MCF 10A (cell line): ENCODE measurements at regions of chr5 and their contacts with region 1.

Region 1: DNA sequence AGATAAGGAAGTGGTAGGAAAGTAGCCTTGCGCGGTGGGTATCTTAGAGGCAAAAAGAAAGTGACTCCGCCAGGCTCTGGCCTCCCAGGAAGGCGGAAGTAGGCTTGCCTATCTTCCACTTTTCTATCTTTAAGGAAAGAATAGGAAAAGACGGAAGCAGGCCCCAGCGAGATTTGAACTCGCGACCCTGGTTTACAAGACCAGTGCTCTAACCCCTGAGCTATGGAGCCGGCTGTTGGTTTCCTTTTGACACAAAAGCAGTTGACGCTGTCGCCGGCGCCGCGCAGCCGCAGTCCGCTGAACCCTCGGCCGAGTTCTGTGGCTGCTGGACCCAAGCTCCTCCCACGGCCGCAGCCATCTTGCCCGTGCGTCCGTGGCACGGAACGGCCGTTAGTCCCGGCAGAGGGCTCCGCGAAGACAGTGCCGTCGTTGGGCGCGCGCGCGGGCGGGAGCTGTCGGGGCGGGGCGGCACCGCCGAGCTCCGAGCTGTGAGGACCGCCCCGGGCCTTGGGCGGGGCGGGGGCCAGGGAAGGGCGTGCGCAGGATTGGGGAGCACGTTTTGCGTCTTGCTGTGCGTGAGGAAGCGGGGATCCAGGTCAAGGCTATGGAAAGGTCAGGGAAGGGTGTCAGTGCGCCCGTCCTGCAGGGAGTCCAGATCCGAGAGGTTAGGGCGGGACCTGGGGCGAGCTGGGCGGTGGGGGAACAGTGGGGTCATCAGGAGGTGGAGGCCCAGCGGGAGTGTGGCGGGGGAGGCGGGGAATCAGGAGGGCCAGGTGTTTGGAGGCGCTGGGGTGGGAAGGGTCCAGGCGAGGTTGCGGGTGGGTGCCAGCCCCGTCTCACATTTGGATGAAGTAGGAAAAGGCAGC is 13.2 kb downstream of the TRIM7 start:
- DNase-seq: peak; percentile 97
- H3K4me3 Mint-ChIP-seq: peak overlapping the region; percentile 96
- H3K27ac Mint-ChIP-seq: peak overlapping the region; percentile 88
- H3K4me1 Mint-ChIP-seq: peaks cover 14% of the 10 kb centered on the region
- H3K27me3 Mint-ChIP-seq: no peaks in the 10 kb centered on the region
- CTCF ChIP-seq: no peak

Region 2: GRCh38 chr5:180802325-180803180 is 389.2 kb before region 1 on chr5 and contains the start of gene MGAT1:
- CTCF ChIA-PET with region 1: interaction called, 4 read pairs
- POLR2A ChIA-PET with region 1: interaction called, 15 read pairs
- intact Hi-C with region 1: loop called (anchors 5 kb)
- DNase-seq: peak; percentile 93
- H3K4me3 Mint-ChIP-seq: peak within 1 kb of the TSS; percentile 75
- H3K27ac Mint-ChIP-seq: peak within 1 kb of the TSS; percentile 78
- H3K4me1 Mint-ChIP-seq: peaks cover 61% of the 10 kb centered on the region
- H3K27me3 Mint-ChIP-seq: no peaks in the 10 kb centered on the region
- CTCF ChIP-seq: no peak
- total RNA-seq, gene MGAT1: 135 and 150 TPM in 2 replicates

Region 3: DNA sequence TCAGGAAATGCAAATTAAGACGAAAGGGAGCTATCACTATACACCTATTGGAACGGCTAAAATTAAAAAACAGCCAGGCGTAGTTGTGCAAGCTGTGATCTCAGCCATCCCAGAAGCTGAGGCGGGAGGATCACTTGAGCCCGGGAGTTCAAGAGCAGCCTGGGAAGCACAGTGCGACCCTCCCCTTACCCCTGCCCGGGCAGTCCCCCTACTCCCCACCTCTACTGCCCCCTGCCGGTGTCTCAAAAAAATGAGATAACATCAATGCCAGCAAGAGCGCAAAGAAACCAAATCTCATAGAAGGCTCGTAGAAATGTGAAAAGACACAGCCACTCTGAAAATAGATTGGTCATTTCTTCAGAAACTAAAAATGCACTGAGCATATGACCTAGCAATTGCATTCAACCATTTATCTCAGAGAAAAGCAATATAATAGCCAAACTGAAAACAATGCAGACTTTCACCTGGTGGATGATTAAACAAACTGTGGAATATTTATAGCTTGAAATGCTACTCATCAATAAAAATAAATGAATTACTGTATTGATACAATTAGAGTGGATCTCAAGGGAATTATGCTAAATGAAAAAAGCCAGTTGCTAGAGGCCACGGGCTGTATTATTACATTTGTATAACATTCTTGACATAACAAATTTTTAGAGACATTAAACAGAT is 23.8 kb before region 1 on chr5:
- CTCF ChIA-PET with region 1: interaction called, 10 read pairs
- POLR2A ChIA-PET with region 1: interaction called, 34 read pairs
- intact Hi-C with region 1: loop called (anchors 2 kb)
- DNase-seq: peak; percentile 54
- H3K4me3 Mint-ChIP-seq: no peak overlapping the region
- H3K27ac Mint-ChIP-seq: no peak overlapping the region
- H3K4me1 Mint-ChIP-seq: peaks cover 35% of the 10 kb centered on the region
- H3K27me3 Mint-ChIP-seq: no peaks in the 10 kb centered on the region
- CTCF ChIP-seq: peak; percentile 73

Region 4: DNA sequence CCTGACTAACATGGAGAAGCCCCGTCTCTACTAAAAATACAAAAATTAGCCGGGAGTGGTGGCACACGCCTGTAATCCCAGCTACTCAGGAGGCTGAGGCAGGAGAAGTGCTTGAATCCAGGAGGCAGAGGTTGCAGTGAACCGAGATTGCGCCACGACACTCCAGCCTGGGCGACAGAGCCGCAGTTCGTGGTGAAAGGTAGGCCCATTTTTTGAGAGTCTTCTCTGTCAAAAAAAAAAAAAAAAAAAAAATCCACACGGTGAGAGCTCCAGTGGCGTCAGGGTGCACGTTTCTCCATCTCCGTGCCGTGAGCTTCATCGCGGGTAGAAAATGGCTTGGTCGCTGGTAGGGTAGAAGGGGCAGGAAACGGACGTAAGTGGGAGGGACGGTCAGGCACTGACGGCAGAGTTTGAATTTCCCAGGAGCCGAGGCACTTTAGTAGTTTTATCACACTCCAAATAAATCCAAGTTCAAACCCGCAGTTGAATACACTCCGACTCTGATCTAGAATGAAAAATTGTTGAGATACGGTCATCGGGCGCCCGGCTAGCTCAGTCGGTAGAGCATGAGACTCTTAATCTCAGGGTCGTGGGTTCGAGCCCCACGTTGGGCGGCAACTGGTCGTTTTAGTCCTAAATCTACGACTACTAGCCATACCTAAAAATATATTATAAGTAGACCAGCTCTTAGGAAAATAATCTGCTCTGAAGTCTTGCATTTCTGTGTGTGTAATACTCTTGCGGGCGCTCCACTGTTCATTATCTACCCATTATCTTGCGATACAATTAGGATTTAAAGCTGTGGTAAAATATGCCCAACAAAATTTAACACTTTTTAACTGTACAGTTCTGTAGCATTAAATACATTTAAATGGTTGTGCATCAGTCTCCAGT is 15.7 kb after region 1 on chr5:
- CTCF ChIA-PET with region 1: interaction called, 67 read pairs
- POLR2A ChIA-PET with region 1: interaction called, 432 read pairs
- intact Hi-C with region 1: loop called (anchors 1 kb)
- DNase-seq: peak; percentile 94
- H3K4me3 Mint-ChIP-seq: peak overlapping the region; percentile 84
- H3K27ac Mint-ChIP-seq: peak overlapping the region; percentile 81
- H3K4me1 Mint-ChIP-seq: peaks cover 29% of the 10 kb centered on the region
- H3K27me3 Mint-ChIP-seq: no peaks in the 10 kb centered on the region
- CTCF ChIP-seq: no peak

Region 5: DNA sequence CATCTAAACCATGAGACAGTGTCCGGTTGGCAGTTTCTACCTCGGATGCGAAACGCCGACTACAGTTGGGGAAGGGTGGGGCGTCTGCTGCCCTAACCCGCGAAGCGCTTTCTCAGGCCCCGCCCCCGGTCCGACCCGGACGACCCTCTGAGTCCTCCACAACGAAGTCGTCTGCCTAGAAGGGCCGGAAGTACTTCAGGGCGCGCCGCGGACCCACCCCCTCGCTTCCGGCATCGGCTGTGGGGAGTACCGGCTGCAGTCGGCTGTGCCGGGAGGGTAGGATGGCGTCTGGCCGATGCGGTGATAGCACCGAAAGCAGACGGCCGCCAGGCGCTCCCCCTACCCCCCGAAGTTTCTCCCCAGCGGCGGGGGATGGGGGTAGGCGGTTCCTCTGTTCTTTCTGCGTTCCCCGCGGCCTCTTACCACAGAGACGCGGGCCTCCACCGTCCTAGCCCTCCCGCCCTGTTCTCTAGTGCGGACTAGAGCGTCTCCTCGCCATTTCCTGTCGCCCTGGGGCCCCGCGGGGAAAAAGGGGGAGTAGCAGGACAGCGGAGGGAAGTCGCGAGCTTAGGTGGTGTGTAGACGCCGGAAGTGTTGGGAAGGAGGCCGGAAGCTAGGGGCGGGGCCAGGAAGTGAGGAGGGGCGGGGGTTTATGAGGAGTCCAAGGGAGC is 31.4 kb after region 1 on chr5 and contains the start of gene TRIM41:
- CTCF ChIA-PET with region 1: interaction called, 3 read pairs
- POLR2A ChIA-PET with region 1: interaction called, 171 read pairs
- intact Hi-C with region 1: loop called (anchors 1 kb)
- DNase-seq: peak; percentile 99
- H3K4me3 Mint-ChIP-seq: peak within 1 kb of the TSS; percentile 91
- H3K27ac Mint-ChIP-seq: peak within 1 kb of the TSS; percentile 91
- H3K4me1 Mint-ChIP-seq: peaks cover 26% of the 10 kb centered on the region
- H3K27me3 Mint-ChIP-seq: no peaks in the 10 kb centered on the region
- CTCF ChIP-seq: no peak
- total RNA-seq, gene TRIM41: 42.8 and 49.4 TPM in 2 replicates

Region 6: GRCh38 chr5:181260387-181261319 is 68.9 kb after region 1 on chr5 and contains the start of gene TRIM52:
- CTCF ChIA-PET with region 1: interaction called, 4 read pairs
- POLR2A ChIA-PET with region 1: interaction called, 32 read pairs
- intact Hi-C with region 1: loop called (anchors 1 kb)
- DNase-seq: peak; percentile 91
- H3K4me3 Mint-ChIP-seq: peak within 1 kb of the TSS; percentile 86
- H3K27ac Mint-ChIP-seq: peak within 1 kb of the TSS; percentile 89
- H3K4me1 Mint-ChIP-seq: peaks cover 23% of the 10 kb centered on the region
- H3K27me3 Mint-ChIP-seq: no peaks in the 10 kb centered on the region
- CTCF ChIP-seq: no peak
- total RNA-seq, gene TRIM52: 12.5 and 16.1 TPM in 2 replicates